Activated CD4-positive, alpha-beta T cell treated with anti-CD3 and anti-CD28 coated beads, Interleukin-2, amount 10 ng/mL, durations not matched to agents 24 days and 14 days (primary cell): ENCODE measurements at regions of chr1 and their contacts with region 1.

Region 1: DNA sequence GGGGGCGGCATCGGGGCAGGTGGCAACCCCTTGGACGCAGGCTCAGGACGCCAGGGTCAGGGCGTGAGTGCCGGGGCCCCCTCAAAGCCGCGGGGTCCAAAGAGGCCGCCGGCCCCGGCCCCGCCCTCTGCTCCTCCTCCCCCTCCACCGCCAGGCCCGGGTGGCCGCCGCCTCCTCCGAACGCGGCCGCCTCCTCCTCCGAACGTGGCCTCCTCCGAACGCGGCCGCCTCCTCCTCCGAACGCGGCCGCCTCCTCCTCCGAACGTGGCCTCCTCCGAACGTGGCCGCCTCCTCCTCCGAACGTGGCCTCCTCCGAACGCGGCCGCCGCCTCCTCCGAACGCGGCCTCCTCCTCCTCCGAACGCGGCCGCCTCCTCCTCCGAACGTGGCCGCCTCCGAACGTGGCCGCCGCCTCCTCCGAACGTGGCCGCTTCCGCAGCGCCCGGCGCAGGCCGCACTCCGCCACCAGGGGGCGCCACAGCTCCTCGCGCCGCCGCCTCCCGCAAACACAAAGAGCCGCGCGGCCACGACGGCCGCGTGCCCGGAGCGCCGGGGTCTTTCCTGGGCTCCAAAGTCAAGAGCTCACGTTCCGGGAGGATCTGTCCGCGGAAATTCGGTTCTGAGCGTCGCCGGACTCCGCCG is 19.3 kb upstream of the SAMD11 start:
- DNase-seq: peak; percentile 97
- H3K4me3 Mint-ChIP-seq: peak overlapping the region; percentile 80
- H3K27ac Mint-ChIP-seq: peak overlapping the region; percentile 69
- H3K4me1 Mint-ChIP-seq: peaks cover 5% of the 10 kb centered on the region
- H3K27me3 Mint-ChIP-seq: peaks cover 45% of the 10 kb centered on the region

Region 2: DNA sequence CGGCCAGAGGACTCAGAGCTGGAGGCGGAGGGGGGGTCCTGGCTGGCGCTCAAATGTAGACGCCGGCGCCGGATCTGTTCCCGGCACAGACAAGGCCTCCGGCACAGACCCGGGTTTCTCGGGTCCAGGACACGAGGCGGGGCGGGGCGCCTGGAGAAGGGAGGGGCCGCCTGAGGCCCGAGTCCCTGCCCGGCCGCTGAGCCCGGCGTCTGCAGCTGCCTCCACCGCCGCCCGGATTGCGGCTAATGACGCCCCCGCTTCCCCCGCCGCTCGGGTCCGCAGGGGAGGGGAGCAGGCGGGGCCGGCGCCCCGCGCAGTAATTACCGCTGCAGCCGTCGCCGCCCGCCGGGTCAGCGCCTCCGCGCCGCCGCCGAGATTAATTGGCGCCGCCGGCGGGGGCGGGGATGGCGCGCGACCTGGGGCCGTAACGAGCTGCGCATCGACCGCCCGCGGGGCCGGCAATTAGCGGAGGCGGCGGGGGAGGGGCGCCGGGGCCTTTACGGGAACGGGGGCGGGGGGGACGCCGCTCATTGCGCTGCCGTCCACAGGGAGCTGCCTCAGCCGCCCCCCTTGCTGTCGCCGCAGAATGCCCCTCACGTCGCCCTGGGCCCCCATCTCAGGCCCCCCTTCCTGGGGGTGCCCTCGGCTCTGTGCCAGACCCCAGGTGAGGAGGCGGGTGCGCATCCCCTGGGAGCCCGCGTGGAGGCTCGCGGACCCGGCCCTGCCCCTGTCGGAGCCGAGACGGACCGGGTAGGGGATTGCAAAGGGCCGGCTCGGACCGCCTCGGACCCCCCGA is 37.4 kb after region 1 on chr1:
- intact Hi-C with region 1: loop called (anchors 5 kb)
- DNase-seq: peak; percentile 74
- H3K4me3 Mint-ChIP-seq: peak overlapping the region; percentile 74
- H3K27ac Mint-ChIP-seq: no peak overlapping the region
- H3K4me1 Mint-ChIP-seq: peaks cover 7% of the 10 kb centered on the region
- H3K27me3 Mint-ChIP-seq: peaks cover 29% of the 10 kb centered on the region

Region 3: DNA sequence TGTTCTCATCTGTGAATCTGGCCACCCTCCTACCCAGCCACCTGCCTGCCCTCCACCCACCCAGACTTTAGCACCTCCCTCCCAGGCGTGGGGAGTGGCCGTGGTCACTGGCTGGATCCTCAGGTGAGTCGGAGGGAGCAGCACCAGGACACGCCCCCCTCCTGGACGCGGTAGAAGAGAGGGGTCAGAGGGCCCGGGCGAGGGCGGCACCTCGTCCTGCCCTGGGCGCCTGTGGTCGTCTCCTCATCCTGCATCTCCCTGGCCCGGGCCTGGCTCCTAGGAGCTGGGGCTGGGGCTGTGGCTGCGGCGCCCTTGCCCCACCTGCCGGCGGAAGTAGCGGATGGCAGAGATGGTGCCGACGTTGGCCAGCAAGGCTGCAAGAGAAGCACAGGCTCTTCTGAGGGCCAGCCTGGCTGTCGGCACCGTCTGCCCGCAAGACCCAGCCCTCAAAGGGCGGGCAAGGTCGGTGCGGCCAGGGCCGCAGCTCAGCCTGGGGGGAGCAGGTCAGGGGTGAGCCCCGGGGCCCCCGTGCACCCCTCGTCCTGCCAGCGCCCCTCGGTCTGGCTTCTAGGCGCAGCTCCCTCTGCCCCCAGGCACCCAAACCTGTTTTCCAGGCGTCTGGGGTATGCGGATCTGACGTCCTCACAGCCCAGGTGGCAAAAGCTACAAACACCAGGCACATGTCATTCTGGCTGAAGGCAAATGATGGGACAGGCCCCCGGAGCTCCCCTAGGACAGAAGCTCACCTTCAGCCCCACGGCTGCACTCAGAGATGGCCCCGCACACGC is 71.7 kb after region 1 on chr1:
- intact Hi-C with region 1: loop called (anchors 1 kb)
- DNase-seq: peak; percentile 91
- H3K4me3 Mint-ChIP-seq: no peak overlapping the region
- H3K27ac Mint-ChIP-seq: no peak overlapping the region
- H3K4me1 Mint-ChIP-seq: peaks cover 5% of the 10 kb centered on the region
- H3K27me3 Mint-ChIP-seq: peaks cover 6% of the 10 kb centered on the region